ENCODE measurements at regions of chr14 and their contacts with region 1.

Region 1: DNA sequence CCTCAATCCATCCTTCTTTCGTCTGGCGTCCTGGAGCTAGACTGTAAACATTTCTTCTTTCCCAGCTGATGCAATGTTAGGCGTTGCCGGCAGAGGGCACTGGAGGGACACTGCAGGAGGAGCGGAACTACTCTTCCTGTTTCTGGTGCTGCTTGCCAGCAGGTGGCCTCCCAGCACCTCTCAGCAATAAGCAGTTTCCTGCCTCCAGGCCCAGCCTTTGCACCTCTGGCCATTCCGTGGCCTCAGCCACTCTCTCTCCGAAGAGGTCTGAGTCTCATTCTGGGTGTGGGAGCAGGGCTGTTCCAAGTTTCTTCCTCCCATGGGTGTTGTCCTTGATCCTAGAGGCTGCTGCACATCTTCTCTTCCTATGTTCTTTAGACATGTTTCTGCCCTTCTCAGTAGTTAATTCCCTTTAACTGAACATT is 7.5 kb upstream of the ASPG start:
- DNase-seq: peak; percentile 69 to 88 (median 83)
- ATAC-seq: peak; percentile 99
- H3K4me3 ChIP-seq: no peak overlapping the region
- H3K4me3 Mint-ChIP-seq: peak overlapping the region in 6 of 10 donors; percentile 4 to 57 (median 20)
- H3K27ac ChIP-seq: no peak overlapping the region
- H3K27ac Mint-ChIP-seq: peak overlapping the region in 7 of 9 donors; percentile 2 to 86 (median 59)
- H3K4me1 ChIP-seq: peaks cover 4 to 11% of the 10 kb centered on the region in 2 donors
- H3K4me1 Mint-ChIP-seq: peaks cover 7 to 24% (median 17%) of the 10 kb centered on the region in 7 donors
- H3K27me3 ChIP-seq: no peaks in the 10 kb centered on the region
- H3K27me3 Mint-ChIP-seq: peaks cover 3 to 14% (median 6%) of the 10 kb centered on the region in 5 donors

Region 2: GRCh38 chr14:103576371-103577024 is 501.5 kb before region 1 on chr14:
- CTCF ChIA-PET with region 1: no interaction called
- POLR2A ChIA-PET with region 1: no interaction called
- intact Hi-C with region 1: loop called in 1 of 2 experiments (anchors 5 kb)
- DNase-seq: no peak
- ATAC-seq: no peak
- H3K4me3 ChIP-seq: no peak overlapping the region
- H3K4me3 Mint-ChIP-seq: no peak overlapping the region
- H3K27ac ChIP-seq: no peak overlapping the region
- H3K27ac Mint-ChIP-seq: no peak overlapping the region
- H3K4me1 ChIP-seq: no peaks in the 10 kb centered on the region
- H3K4me1 Mint-ChIP-seq: peaks cover 0 to 2% (median 0%) of the 10 kb centered on the region in 7 donors
- H3K27me3 ChIP-seq: no peaks in the 10 kb centered on the region
- H3K27me3 Mint-ChIP-seq: no peaks in the 10 kb centered on the region

Region 3: DNA sequence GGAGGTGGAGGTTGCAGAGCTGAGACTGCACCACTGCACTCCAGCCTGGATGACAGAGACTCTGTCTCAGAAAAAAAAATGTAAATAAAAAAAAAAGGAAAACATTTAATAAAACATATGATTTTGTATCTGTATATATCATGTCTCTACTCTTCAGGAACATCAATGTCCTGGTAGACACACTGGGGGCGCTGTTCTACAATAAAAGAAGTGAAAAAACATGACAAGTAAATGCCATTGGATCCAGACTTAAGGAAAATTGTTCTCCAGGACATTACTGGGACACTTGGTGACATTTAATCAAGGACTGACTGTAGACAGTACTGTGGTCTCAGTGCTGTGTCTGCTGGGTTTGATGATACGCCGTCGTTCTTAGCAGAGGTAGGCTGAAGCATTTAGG is 464.5 kb before region 1 on chr14:
- CTCF ChIA-PET with region 1: no interaction called
- POLR2A ChIA-PET with region 1: no interaction called
- intact Hi-C with region 1: no loop called
- DNase-seq: no peak
- ATAC-seq: no peak
- H3K4me3 ChIP-seq: no peak overlapping the region
- H3K4me3 Mint-ChIP-seq: no peak overlapping the region
- H3K27ac ChIP-seq: no peak overlapping the region
- H3K27ac Mint-ChIP-seq: no peak overlapping the region
- H3K4me1 ChIP-seq: peaks cover 2% of the 10 kb centered on the region in 2 donors
- H3K4me1 Mint-ChIP-seq: peaks cover 0 to 2% (median 0%) of the 10 kb centered on the region in 7 donors
- H3K27me3 ChIP-seq: no peaks in the 10 kb centered on the region
- H3K27me3 Mint-ChIP-seq: peaks cover 0 to 7% (median 0%) of the 10 kb centered on the region in 5 donors

Region 4: GRCh38 chr14:104094709-104095438 is 16.8 kb after region 1 on chr14:
- CTCF ChIA-PET with region 1: interaction called, 8 read pairs
- POLR2A ChIA-PET with region 1: no interaction called
- intact Hi-C with region 1: loop called in 1 of 2 experiments (anchors 2 kb)
- DNase-seq: peak; percentile 48 to 82 (median 67)
- ATAC-seq: peak; percentile 62
- H3K4me3 ChIP-seq: no peak overlapping the region
- H3K4me3 Mint-ChIP-seq: no peak overlapping the region
- H3K27ac ChIP-seq: no peak overlapping the region
- H3K27ac Mint-ChIP-seq: no peak overlapping the region
- H3K4me1 ChIP-seq: peaks cover 0 to 7% of the 10 kb centered on the region in 2 donors
- H3K4me1 Mint-ChIP-seq: peaks cover 0 to 6% (median 3%) of the 10 kb centered on the region in 7 donors
- H3K27me3 ChIP-seq: no peaks in the 10 kb centered on the region
- H3K27me3 Mint-ChIP-seq: no peaks in the 10 kb centered on the region

Region 5: GRCh38 chr14:104137297-104138097 is 59.5 kb after region 1 on chr14:
- CTCF ChIA-PET with region 1: no interaction called
- POLR2A ChIA-PET with region 1: no interaction called
- intact Hi-C with region 1: loop called in 1 of 2 experiments (anchors 1 kb)
- DNase-seq: peak; percentile 8 to 77 (median 48)
- ATAC-seq: peak; percentile 72
- H3K4me3 ChIP-seq: no peak overlapping the region
- H3K4me3 Mint-ChIP-seq: peak overlapping the region; percentile 25 to 81 (median 63)
- H3K27ac ChIP-seq: no peak overlapping the region
- H3K27ac Mint-ChIP-seq: no peak overlapping the region
- H3K4me1 ChIP-seq: no peaks in the 10 kb centered on the region
- H3K4me1 Mint-ChIP-seq: peaks cover 0 to 10% (median 5%) of the 10 kb centered on the region in 7 donors
- H3K27me3 ChIP-seq: peaks cover 0 to 12% of the 10 kb centered on the region in 2 donors
- H3K27me3 Mint-ChIP-seq: peaks cover 20 to 41% (median 29%) of the 10 kb centered on the region in 5 donors

Region 6: GRCh38 chr14:104314251-104314941 is 236.4 kb after region 1 on chr14:
- CTCF ChIA-PET with region 1: no interaction called
- POLR2A ChIA-PET with region 1: no interaction called
- intact Hi-C with region 1: no loop called
- DNase-seq: peak in 1 of 9 donors; percentile 5
- ATAC-seq: no peak
- H3K4me3 ChIP-seq: no peak overlapping the region
- H3K4me3 Mint-ChIP-seq: no peak overlapping the region
- H3K27ac ChIP-seq: no peak overlapping the region
- H3K27ac Mint-ChIP-seq: no peak overlapping the region
- H3K4me1 ChIP-seq: no peaks in the 10 kb centered on the region
- H3K4me1 Mint-ChIP-seq: no peaks in the 10 kb centered on the region
- H3K27me3 ChIP-seq: no peaks in the 10 kb centered on the region
- H3K27me3 Mint-ChIP-seq: no peaks in the 10 kb centered on the region

Region 7: DNA sequence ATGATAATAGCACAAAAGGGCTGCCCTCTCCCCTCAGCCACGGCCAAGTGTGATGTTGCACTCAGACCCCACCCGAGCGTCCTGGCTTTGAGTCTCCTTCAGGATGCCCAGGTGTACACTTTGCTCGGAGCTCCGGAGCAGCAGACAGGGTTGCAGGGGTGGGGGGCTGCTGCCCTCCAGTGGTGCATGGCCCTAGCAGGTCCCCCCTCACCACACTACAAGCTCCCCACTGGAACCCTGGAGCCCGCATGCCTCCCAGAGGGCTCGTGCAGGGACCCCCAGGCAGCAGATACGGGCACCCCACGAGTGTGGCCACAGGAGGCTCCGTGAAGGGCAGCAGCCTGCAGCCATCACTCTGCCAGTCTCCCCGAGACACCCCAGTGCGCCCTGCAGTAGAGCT is 431.6 kb after region 1 on chr14:
- CTCF ChIA-PET with region 1: interaction called, 5 read pairs
- POLR2A ChIA-PET with region 1: no interaction called
- intact Hi-C with region 1: loop called in 1 of 2 experiments (anchors 1 kb)
- DNase-seq: no peak
- ATAC-seq: no peak
- H3K4me3 ChIP-seq: no peak overlapping the region
- H3K4me3 Mint-ChIP-seq: no peak overlapping the region
- H3K27ac ChIP-seq: no peak overlapping the region
- H3K27ac Mint-ChIP-seq: no peak overlapping the region
- H3K4me1 ChIP-seq: no peaks in the 10 kb centered on the region
- H3K4me1 Mint-ChIP-seq: peaks cover 0 to 2% (median 0%) of the 10 kb centered on the region in 7 donors
- H3K27me3 ChIP-seq: no peaks in the 10 kb centered on the region
- H3K27me3 Mint-ChIP-seq: peaks cover 0 to 24% (median 0%) of the 10 kb centered on the region in 5 donors

Region 8: DNA sequence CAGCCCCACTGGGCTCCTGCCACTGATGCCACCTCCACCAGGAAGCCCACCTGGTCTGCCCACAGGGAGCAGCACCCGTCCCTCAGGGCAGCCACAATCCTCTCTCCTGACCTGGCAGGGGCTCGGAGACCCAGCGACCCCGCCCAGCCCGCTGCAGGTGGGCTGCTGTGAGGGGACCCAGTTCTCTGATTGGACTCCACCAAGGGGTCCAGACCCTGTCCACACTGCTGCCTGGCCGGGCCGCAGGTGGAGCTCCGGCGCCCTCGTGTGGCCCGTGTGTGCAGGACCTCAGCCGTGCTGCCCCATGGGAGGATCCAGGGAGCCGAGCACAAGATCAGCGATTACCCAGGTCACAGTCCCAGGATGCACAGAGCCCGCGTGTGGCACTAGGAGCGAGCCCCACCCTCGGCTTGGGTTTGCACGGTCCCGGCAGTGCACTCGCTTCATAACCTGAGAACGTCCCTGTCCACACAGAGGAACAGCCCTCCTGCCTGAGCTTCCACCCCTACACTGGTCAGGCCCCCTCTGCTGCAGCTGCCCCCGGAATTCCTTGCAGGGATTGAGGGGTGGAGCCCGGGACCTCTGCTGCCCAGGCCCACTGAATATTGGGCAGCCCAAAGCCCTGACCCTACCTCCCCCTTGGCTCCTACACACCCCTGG is 562.0 kb after region 1 on chr14:
- CTCF ChIA-PET with region 1: interaction called, 3 read pairs
- POLR2A ChIA-PET with region 1: no interaction called
- intact Hi-C with region 1: loop called (anchors 1 to 5 kb)
- DNase-seq: peak in 6 of 9 donors; percentile 20 to 57 (median 42)
- ATAC-seq: peak; percentile 66
- H3K4me3 ChIP-seq: no peak overlapping the region
- H3K4me3 Mint-ChIP-seq: no peak overlapping the region
- H3K27ac ChIP-seq: no peak overlapping the region
- H3K27ac Mint-ChIP-seq: no peak overlapping the region
- H3K4me1 ChIP-seq: no peaks in the 10 kb centered on the region
- H3K4me1 Mint-ChIP-seq: peaks cover 0 to 5% (median 0%) of the 10 kb centered on the region in 7 donors
- H3K27me3 ChIP-seq: no peaks in the 10 kb centered on the region
- H3K27me3 Mint-ChIP-seq: peaks cover 0 to 12% (median 7%) of the 10 kb centered on the region in 5 donors

Region 9: GRCh38 chr14:105448706-105449111 is 1370.7 kb after region 1 on chr14:
- CTCF ChIA-PET with region 1: no interaction called
- POLR2A ChIA-PET with region 1: no interaction called
- intact Hi-C with region 1: no loop called
- DNase-seq: peak; percentile 45 to 76 (median 63)
- ATAC-seq: peak; percentile 92
- H3K4me3 ChIP-seq: no peak overlapping the region
- H3K4me3 Mint-ChIP-seq: no peak overlapping the region
- H3K27ac ChIP-seq: no peak overlapping the region
- H3K27ac Mint-ChIP-seq: no peak overlapping the region
- H3K4me1 ChIP-seq: no peaks in the 10 kb centered on the region
- H3K4me1 Mint-ChIP-seq: peaks cover 0 to 3% (median 0%) of the 10 kb centered on the region in 7 donors
- H3K27me3 ChIP-seq: no peaks in the 10 kb centered on the region
- H3K27me3 Mint-ChIP-seq: no peaks in the 10 kb centered on the region

Measured in naive thymus-derived CD4-positive, alpha-beta T cell (primary cell).